IMR-90 (cell line): ENCODE measurements at regions of chr5 and their contacts with region 1.

Region 1: GRCh38 chr5:33195431-33196165 is 245.2 kb upstream of the TARS1 start:
- DNase-seq: peak; percentile 63
- ATAC-seq: peak; percentile 93
- H3K4me3 ChIP-seq: no peak overlapping the region
- H3K27ac ChIP-seq: no peak overlapping the region
- H3K4me1 ChIP-seq: no peaks in the 10 kb centered on the region; the same call in 1 of the 2 replicates
- H3K27me3 ChIP-seq: no peaks in the 10 kb centered on the region
- CTCF ChIP-seq: no peak
- POLR2A ChIP-seq: no peak
- RAD21 ChIP-seq: no peak

Region 2: DNA sequence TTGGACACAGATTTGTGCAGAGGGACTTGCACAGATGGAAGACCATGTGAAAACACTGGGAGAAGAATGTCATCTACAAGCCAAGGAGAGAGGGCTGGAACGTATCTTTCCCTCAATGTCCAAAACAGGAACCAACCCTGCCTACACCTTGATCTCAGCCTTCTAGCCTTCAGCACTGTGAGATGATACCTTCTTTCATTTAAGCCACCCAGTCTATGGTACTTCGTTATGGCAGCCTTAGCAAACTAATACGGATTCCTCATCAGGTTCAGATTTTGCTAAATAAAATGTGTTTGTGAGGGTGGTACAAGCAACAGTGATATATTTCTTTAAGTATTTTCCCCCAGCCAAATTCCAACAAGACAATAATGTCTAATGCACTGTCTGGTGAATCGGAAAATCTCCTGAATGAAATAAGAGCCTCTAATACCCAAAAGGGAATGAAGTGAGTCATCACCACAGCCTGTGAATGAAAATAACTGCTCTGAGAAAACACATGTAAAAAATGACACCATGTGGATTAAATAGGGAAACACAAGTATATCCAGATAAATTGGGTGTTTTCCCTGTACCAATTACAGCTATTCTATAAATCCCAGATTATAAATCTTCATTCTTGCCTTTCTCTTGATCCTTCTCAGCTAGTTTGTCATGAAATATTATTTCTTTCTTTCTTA is 62.3 kb after region 1 on chr5:
- CTCF ChIA-PET with region 1: no interaction called
- POLR2A ChIA-PET with region 1: no interaction called
- dilution Hi-C with region 1: no loop called
- in situ Hi-C with region 1: no loop called
- intact Hi-C with region 1: loop called (anchors 5 kb)
- DNase-seq: peak; percentile 89
- ATAC-seq: peak; percentile 94
- H3K4me3 ChIP-seq: no peak overlapping the region
- H3K27ac ChIP-seq: no peak overlapping the region
- H3K4me1 ChIP-seq: peaks cover 5% of the 10 kb centered on the region
- H3K27me3 ChIP-seq: no peaks in the 10 kb centered on the region
- CTCF ChIP-seq: peak; percentile 28
- POLR2A ChIP-seq: no peak
- RAD21 ChIP-seq: peak; percentile 54

Region 3: DNA sequence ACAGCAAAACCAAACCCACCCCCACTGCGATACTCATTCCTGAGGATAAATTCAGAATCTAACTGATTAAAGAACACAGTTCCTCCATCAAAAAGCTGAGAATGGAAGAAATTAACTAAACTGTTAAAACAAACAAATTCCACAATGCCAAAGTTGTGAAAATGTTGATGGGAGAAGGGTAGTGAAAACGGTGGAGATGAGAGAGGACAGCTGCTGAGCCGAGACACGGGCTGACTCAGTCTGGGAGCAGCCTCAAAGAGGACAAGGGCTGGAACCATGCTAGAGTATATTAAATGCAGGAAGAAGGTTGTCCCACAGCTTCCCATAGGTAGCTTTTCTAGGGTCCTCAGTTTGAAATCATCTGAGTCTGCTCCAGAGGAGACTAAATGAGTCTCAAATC is 681.9 kb after region 1 on chr5:
- CTCF ChIA-PET with region 1: no interaction called
- POLR2A ChIA-PET with region 1: no interaction called
- dilution Hi-C with region 1: no loop called
- in situ Hi-C with region 1: no loop called
- intact Hi-C with region 1: no loop called
- DNase-seq: no peak
- ATAC-seq: no peak
- H3K4me3 ChIP-seq: no peak overlapping the region
- H3K27ac ChIP-seq: no peak overlapping the region
- H3K4me1 ChIP-seq: no peaks in the 10 kb centered on the region
- H3K27me3 ChIP-seq: no peaks in the 10 kb centered on the region
- CTCF ChIP-seq: no peak
- POLR2A ChIP-seq: no peak
- RAD21 ChIP-seq: no peak